WTC11 (cell line): ENCODE measurements at regions of chr7 and their contacts with region 1.

Region 1: DNA sequence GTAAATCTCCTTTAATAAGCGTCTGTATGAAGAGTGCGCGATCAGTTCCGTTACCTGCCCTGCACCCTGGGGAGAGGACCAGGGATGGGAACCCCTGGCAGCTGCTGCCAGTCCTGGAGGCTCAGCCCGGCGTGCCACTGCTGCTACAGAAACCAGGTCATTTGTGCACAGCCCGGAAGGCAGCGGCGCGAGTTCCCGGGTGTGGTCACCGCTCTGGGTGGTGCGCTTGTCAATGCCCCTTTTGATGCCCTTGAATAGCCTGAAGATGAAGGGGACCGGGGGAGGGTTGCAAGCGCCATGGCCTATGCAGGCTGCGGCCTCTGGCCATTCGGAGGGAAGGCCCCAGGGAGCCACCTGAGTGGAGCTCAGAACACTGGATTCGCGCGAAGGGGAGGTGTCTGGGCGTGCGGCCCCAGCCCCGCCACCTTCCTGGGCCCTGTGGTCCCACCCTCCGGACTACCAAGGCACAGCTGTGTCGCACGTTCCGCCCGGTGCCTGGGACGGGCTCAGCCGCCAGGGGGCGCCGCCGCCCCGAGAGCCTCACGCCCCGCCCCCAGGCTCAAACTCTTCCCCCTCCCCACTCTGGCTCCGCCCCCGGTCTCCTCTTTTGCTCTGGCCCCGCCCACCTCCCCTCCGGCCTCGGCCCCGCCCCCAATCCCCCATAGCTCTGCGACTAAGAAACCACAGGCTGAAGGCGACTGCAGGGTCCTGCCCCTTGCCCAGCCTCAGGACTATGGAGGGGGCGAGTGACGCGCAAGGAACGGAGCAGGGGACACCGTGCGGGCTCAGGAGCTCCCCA is 16.5 kb downstream of the AP5Z1 start:
- DNase-seq: peak; percentile 93
- ATAC-seq: peak; percentile 83
- H3K4me3 Mint-ChIP-seq: peak overlapping the region; percentile 54
- H3K27ac Mint-ChIP-seq: no peak overlapping the region
- H3K4me1 Mint-ChIP-seq: peaks cover 5% of the 10 kb centered on the region
- H3K27me3 Mint-ChIP-seq: no peaks in the 10 kb centered on the region
- CTCF ChIP-seq: peak; percentile 92

Region 2: GRCh38 chr7:4706384-4707216 is 85.3 kb before region 1 on chr7:
- CTCF ChIA-PET with region 1: interaction called, 10 read pairs
- POLR2A ChIA-PET with region 1: no interaction called
- DNase-seq: no peak
- ATAC-seq: peak; percentile 12
- H3K4me3 Mint-ChIP-seq: peak overlapping the region; percentile 79
- H3K27ac Mint-ChIP-seq: peak overlapping the region; percentile 97
- H3K4me1 Mint-ChIP-seq: peaks cover 54% of the 10 kb centered on the region
- H3K27me3 Mint-ChIP-seq: peaks cover 96% of the 10 kb centered on the region
- CTCF ChIP-seq: no peak

Region 3: DNA sequence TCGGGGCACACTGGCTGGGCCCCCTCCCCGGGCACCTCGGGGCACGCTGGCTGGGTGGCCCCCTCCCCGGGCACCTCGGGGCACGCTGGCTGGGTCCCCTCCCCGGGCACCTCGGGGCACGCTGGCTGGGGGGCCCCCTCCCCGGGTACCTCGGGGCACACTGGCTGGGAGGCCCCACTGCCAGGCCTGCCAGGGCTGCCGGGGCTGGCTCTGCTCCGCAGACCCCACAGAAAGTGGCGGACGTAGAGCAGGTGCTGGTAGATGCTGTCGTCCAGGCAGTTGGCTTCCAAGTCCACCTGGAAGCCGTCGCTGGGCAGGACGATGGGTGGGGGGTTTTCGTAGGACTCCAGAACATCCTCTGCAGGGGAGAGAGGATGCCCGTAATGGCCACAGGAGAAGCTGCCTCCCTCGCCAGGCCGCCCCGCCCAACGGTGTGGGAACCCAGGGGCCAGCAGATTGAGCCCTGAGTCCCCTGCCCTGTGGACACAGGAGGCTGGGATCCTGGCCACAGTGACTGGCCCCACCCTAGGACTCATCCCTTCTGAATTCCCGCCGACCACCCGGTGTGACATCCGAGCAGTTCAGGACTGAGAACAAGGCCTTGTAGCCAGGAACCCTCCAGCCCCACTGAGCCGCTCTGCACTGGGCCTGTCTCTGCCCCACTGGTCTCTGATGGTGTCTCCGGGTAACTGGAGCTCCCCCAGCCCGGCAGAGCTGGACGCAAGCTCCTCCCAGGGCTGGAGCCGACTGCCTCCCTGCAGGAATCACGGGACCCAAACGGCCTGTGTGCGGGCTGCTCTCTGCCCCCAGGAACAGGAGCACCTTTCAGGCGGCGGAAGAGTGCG is 11.7 kb after region 1 on chr7:
- CTCF ChIA-PET with region 1: interaction called, 37 read pairs
- POLR2A ChIA-PET with region 1: interaction called, 3 read pairs
- DNase-seq: peak; percentile 35
- ATAC-seq: peak; percentile 70
- H3K4me3 Mint-ChIP-seq: no peak overlapping the region
- H3K27ac Mint-ChIP-seq: peak overlapping the region; percentile 85; the same call in 1 of the 2 replicates
- H3K4me1 Mint-ChIP-seq: peaks cover 4% of the 10 kb centered on the region
- H3K27me3 Mint-ChIP-seq: peaks cover 14% of the 10 kb centered on the region
- CTCF ChIP-seq: no peak

Region 4: GRCh38 chr7:4830176-4830575 is 38.2 kb after region 1 on chr7:
- CTCF ChIA-PET with region 1: interaction called, 17 read pairs
- POLR2A ChIA-PET with region 1: no interaction called
- DNase-seq: peak; percentile 88
- ATAC-seq: peak; percentile 98
- H3K4me3 Mint-ChIP-seq: no peak overlapping the region
- H3K27ac Mint-ChIP-seq: peak overlapping the region; percentile 87
- H3K4me1 Mint-ChIP-seq: peaks cover 2% of the 10 kb centered on the region
- H3K27me3 Mint-ChIP-seq: no peaks in the 10 kb centered on the region
- CTCF ChIP-seq: peak; percentile 66; the same call in 1 of the 2 replicates

Region 5: DNA sequence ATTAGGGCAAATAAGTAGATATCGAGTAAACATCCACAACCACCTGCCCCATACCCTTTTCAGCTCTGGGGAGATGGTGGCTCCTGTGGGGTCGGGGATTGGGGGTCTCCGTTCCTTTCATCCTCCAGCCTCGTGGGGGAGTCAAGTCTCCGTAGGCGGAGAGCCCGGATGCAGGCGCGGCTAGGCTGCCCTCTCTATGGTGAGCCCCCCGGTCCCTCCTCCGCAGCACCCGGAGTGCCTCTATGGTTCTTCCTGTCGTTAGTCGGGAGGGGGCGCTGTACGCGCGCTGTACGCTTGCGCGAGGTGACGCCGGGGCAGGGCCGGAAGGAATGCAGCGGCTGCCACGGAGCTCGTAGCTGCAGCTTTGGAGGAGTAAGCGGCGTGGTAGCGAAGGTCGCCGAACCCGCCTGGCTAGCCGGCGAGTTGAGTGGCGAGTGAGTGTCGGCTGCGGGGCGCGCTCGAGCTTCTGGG is 181.8 kb after region 1 on chr7:
- CTCF ChIA-PET with region 1: interaction called, 29 read pairs
- POLR2A ChIA-PET with region 1: no interaction called
- DNase-seq: peak; percentile 95
- ATAC-seq: peak; percentile 98
- H3K4me3 Mint-ChIP-seq: peak overlapping the region; percentile 93
- H3K27ac Mint-ChIP-seq: peak overlapping the region; percentile 94
- H3K4me1 Mint-ChIP-seq: no peaks in the 10 kb centered on the region
- H3K27me3 Mint-ChIP-seq: no peaks in the 10 kb centered on the region; the same call in 1 of the 2 replicates
- CTCF ChIP-seq: peak; percentile 81; the same call in 1 of the 2 replicates